Endothelial cell of umbilical vein (primary cell): ENCODE measurements at regions of chr6 and their contacts with region 1.

Region 1: GRCh38 chr6:16332175-16332542 is 93.8 kb downstream of the GMPR start:
- DNase-seq: peak; percentile 89
- H3K4me3 ChIP-seq: no peak overlapping the region
- H3K27ac ChIP-seq: no peak overlapping the region
- H3K4me1 ChIP-seq: peaks cover 24% of the 10 kb centered on the region
- H3K27me3 ChIP-seq: no peaks in the 10 kb centered on the region
- CTCF ChIP-seq: peak; percentile 82
- POLR2A ChIP-seq: no peak

Region 2: GRCh38 chr6:16228709-16229665 is 103.2 kb before region 1 on chr6:
- CTCF ChIA-PET with region 1: interaction called, 5 read pairs
- POLR2A ChIA-PET with region 1: no interaction called
- dilution Hi-C with region 1: no loop called
- intact Hi-C with region 1: loop called (anchors 2 kb)
- DNase-seq: peak; percentile 34
- H3K4me3 ChIP-seq: peak overlapping the region in 1 of 3 experiments; percentile 3
- H3K27ac ChIP-seq: no peak overlapping the region
- H3K4me1 ChIP-seq: peaks cover 7% of the 10 kb centered on the region
- H3K27me3 ChIP-seq: peaks cover 0 to 3% of the 10 kb centered on the region in 2 experiments
- CTCF ChIP-seq: no peak
- POLR2A ChIP-seq: no peak

Region 3: GRCh38 chr6:16286148-16286522 is 46.0 kb before region 1 on chr6:
- CTCF ChIA-PET with region 1: interaction called, 6 read pairs
- POLR2A ChIA-PET with region 1: no interaction called
- dilution Hi-C with region 1: no loop called
- intact Hi-C with region 1: loop called (anchors 1 kb)
- DNase-seq: peak; percentile 19
- H3K4me3 ChIP-seq: no peak overlapping the region
- H3K27ac ChIP-seq: no peak overlapping the region
- H3K4me1 ChIP-seq: peaks cover 2% of the 10 kb centered on the region
- H3K27me3 ChIP-seq: no peaks in the 10 kb centered on the region
- CTCF ChIP-seq: peak; percentile 64 to 82
- POLR2A ChIP-seq: no peak

Region 4: DNA sequence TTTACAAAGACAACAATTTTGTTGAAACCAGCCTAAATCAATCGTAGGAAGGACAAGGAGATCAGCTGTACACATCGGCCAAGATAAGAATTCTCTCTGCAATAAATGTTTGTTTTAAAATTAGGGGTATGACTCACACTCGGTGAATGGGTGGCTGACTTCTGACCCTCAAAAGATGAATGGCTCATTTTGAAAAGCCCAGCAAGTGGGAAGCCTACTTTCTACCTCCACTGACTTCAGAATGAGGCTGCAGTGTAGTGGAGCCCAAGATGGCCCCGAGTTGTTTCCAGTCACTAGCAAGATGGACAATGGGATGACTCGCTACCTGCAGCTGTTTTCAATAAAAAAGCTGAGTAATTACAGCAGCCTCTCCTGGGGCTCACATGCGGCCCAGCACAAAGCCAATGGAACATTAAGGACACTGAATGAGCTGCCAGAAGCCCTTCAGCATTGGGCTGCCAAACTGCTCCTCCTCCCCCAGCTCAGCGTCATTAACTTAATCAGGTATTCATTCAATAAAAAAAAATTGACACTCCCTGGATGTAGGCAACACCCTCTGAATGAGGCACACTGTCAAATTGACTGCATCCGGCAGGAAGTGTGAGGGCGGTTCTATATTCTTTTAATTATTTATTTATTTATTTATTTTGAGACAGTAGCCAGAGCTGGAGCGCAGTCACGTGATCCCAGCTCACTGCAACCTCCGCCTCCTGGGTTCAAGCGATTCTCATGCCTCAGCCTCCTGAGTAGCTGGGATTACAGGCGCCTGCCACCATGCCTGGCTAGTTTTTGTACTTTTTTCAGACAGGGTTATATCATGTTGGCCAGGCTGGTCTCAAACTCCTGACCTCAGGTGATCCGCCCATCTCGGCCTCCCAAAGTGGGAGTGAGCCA is 13.5 kb after region 1 on chr6:
- CTCF ChIA-PET with region 1: interaction called, 10 read pairs
- POLR2A ChIA-PET with region 1: interaction called, 6 read pairs
- dilution Hi-C with region 1: no loop called
- intact Hi-C with region 1: loop called (anchors 1 kb)
- DNase-seq: peak; percentile 89
- H3K4me3 ChIP-seq: no peak overlapping the region
- H3K27ac ChIP-seq: peak overlapping the region; percentile 31
- H3K4me1 ChIP-seq: peaks cover 17% of the 10 kb centered on the region
- H3K27me3 ChIP-seq: no peaks in the 10 kb centered on the region
- CTCF ChIP-seq: no peak
- POLR2A ChIP-seq: no peak

Region 5: GRCh38 chr6:16514249-16514648 is 182.1 kb after region 1 on chr6:
- CTCF ChIA-PET with region 1: interaction called, 22 read pairs
- POLR2A ChIA-PET with region 1: no interaction called
- dilution Hi-C with region 1: no loop called
- intact Hi-C with region 1: loop called (anchors 2 kb)
- DNase-seq: peak; percentile 60
- H3K4me3 ChIP-seq: no peak overlapping the region
- H3K27ac ChIP-seq: no peak overlapping the region
- H3K4me1 ChIP-seq: peaks cover 6% of the 10 kb centered on the region
- H3K27me3 ChIP-seq: no peaks in the 10 kb centered on the region
- CTCF ChIP-seq: peak; percentile 36 to 55
- POLR2A ChIP-seq: no peak

Region 6: DNA sequence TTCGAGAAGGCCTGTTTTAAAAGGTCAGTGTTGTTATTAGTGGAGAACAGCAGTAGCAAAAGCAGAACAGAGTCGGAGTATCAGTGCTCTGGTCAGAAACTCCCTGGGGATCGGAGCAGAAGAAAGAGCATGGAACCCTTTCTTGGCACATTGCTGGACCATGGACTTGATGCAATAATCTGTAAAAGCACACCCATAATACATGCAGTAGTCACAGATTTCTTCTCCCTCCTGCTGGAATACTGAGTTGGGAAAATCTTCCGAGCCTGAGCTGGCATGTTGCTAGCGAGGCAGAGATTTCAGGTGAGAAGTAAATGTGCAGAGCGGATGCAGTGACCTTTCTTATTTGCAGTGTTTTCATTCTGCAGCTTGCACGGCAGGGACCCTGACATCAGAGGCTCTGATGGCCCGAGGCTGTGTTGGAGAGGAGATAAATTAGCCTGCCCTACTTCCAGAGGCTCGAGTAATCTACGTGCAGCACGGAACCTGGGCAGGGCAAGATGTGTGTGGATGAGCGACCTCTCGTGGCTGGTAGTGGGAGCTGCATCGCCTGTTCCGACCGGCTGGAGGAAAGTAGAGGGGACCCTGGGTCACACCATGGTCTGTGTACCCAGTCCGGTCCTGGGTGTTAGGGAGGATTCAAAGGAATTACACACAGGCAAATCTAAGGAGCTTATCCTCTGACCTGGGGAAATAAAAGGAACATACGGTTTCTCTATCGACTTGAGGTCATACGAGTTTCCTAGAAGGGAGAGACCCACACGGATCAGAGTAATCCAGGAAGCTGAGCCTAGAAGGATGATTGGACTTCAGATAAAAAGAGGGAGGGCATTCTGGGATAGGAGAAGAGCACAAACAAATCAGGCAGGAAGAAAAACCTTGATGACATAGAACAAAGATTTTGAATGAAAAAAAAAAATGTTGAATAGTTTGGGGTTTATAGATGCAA is 632.7 kb after region 1 on chr6:
- CTCF ChIA-PET with region 1: interaction called, 10 read pairs
- POLR2A ChIA-PET with region 1: no interaction called
- dilution Hi-C with region 1: no loop called
- intact Hi-C with region 1: loop called (anchors 2 kb)
- DNase-seq: peak; percentile 66
- H3K4me3 ChIP-seq: no peak overlapping the region
- H3K27ac ChIP-seq: no peak overlapping the region
- H3K4me1 ChIP-seq: peaks cover 11% of the 10 kb centered on the region
- H3K27me3 ChIP-seq: peaks cover 0 to 2% of the 10 kb centered on the region in 2 experiments
- CTCF ChIP-seq: peak; percentile 94 to 97
- POLR2A ChIP-seq: no peak